ENCODE measurements at regions of chr16 and their contacts with region 1.

Region 1: DNA sequence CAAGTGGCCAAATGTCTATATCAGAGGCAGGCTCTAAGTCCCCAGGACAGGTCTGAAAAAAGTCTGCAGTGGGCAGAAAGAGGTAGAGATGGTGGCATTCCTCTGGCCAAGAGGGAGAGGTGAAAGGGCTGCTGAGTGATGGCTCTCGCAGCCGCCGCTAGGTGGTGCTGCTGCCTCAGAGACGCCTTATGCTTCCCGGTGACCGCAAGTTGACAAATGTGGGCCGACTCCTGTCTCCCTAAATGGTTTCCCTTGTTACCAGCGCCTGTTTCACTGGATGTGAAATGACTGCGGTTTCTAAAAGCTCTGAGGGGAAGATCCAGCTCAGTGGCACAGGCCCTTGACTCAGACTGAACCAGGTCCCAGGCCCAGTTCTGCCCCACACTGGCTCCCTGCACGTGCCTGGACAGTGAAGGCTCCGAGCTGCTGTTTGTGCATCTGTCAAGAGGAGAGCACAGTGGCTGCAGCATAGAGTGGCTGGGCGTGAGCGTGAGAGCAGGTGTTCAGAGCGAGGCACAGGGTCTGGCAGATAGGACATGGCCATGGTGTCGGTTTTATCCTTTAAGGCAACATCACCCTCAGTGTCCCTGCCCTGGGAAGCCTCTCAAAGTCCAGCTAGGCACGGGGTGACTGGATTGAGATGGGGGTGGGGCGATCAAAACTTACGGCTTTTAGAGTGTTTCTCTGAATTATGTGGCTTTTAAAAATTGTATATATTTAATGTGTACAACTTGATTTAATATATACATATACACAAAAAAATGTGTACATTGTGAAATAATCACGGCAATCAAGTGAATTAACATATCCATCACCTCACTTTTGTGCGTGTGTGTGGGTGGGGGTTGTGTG is 19.9 kb downstream of the CLEC16A start:
- DNase-seq: peak; percentile 74
- H3K4me3 Mint-ChIP-seq: peak overlapping the region; percentile 68
- H3K27ac Mint-ChIP-seq: peak overlapping the region; percentile 97
- H3K4me1 Mint-ChIP-seq: peaks cover 75% of the 10 kb centered on the region
- H3K27me3 Mint-ChIP-seq: no peaks in the 10 kb centered on the region

Region 2: DNA sequence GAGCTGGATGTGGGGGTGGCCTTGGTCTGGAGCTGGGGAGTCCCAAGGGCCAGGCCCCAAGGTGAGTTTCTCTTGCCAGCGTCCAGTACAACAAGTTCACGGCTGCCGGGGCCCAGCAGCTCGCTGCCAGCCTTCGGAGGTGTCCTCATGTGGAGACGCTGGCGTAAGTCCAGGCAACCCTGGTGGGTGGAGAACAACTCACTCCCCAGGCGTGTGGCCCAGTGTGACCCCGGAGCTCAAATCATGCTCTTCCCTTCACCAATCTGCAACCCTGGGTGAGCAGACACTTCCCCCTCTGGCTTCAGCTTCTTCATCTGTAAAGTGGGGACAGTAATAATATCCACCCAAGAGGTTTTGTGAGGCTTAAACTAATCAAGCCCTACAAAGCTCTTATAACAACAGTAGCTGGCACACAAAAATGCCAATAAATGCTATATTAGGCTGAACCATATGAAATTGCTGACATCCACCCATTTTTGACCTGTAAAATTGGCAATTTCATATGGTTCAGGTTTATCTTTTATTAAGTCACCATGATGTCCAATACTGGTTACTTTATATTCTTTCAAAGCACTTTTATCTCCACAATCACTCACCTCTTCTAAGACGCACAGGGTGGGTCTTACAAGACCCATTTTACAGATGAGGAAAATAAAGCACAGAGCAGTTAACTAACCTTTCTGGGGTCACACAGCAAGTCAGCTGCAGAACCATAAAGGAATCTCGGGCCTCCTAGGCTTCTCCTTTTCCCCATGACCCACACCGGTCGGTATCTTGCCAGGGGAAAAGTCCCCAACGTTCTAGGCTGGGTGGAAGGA is 41.7 kb before region 1 on chr16:
- intact Hi-C with region 1: no loop called
- DNase-seq: no peak
- H3K4me3 Mint-ChIP-seq: no peak overlapping the region
- H3K27ac Mint-ChIP-seq: no peak overlapping the region
- H3K4me1 Mint-ChIP-seq: peaks cover 14% of the 10 kb centered on the region
- H3K27me3 Mint-ChIP-seq: no peaks in the 10 kb centered on the region

Region 3: DNA sequence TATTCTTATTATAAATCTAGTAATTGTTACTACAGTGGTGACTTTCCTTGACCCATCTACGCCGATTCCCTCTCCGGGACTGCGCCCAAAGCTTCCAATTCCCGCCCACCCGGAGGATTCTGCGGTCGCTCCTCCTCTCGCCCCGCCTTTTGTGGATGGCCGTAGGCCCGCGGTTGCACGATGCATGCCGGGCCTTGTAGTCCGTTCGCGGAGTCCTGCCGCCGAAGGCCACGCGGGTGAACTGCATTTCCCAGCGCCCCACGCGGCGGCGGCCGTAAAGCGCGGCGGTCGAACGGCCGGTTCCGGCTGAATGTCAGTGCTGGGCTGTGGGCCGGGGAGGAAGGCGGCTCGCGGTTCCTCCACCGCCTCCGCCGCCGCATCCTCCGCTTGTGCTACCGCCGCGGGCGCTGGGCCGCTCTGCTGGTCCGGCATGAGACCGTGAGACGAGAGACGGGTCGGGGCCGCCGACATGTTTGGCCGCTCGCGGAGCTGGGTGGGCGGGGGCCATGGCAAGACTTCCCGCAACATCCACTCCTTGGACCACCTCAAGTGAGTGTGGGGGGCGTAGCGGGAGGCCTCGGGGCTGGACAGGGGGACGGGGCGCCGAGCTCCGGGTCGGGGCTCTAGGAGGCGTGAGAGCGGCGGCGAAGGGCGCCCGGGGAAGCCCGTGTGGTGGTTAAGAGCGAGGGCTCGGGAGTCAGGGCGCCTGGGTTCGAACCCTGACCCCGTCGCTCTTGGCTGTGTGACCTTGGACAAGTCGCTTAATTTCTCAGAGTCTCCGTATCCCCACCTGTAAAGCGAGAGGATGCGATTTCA is 19.8 kb before region 1 on chr16 and contains the start of gene CLEC16A:
- intact Hi-C with region 1: loop called (anchors 1 kb)
- DNase-seq: peak; percentile 97
- H3K4me3 Mint-ChIP-seq: peak within 1 kb of the TSS; percentile 91
- H3K27ac Mint-ChIP-seq: peak within 1 kb of the TSS; percentile 80
- H3K4me1 Mint-ChIP-seq: peaks cover 56% of the 10 kb centered on the region
- H3K27me3 Mint-ChIP-seq: no peaks in the 10 kb centered on the region
- total RNA-seq, gene CLEC16A: 36.3 and 37.4 TPM in 2 replicates

Region 4: DNA sequence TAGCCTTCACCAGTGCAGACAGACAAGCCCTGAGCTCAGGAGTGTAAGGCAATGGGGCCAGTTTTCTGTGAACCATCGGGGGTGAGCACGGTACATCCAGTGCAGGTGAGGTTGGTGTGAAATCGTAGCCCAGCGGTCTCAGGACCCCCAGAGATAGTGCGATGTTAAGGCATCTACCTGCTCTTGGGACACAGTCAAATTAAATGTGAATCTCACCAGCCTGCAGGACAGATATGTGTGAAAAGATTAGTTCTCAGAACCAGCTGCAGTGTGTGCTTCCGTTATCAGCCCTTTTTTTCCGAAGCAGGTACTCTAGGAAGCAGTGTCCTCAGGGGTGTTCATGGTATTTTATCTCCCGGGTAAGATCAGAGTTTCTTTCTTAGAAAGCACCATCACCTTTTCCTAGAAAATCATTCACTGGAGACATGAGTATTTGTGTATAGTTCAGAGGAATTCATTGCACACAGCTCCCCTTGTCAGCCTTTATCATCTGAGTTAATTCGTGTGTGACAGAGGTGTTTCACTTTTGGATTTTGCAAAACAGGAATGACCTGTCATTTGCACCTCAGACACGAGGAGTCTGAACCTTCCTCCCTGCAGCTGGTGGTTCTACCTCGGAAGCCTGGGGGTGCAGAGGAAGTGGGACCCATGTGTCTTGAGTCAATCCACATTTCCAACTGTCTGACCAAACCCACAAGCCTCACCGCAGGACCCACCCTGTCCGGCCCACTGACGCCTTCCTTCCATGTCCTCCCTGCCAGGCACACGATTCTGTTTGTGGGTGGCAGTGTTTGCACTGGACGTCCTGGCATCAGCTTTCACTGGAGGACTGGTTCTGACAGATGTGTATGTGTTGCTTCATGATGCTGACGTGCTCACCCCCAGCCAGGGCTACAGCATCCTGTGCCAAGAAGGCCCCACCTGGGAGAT is 87.9 kb after region 1 on chr16:
- intact Hi-C with region 1: loop called (anchors 1 kb)
- DNase-seq: peak; percentile 75
- H3K4me3 Mint-ChIP-seq: peak overlapping the region; percentile 60
- H3K27ac Mint-ChIP-seq: peak overlapping the region; percentile 83
- H3K4me1 Mint-ChIP-seq: peaks cover 68% of the 10 kb centered on the region
- H3K27me3 Mint-ChIP-seq: no peaks in the 10 kb centered on the region

Region 5: GRCh38 chr16:11212798-11213205 is 248.5 kb after region 1 on chr16:
- intact Hi-C with region 1: no loop called
- DNase-seq: no peak
- H3K4me3 Mint-ChIP-seq: no peak overlapping the region
- H3K27ac Mint-ChIP-seq: no peak overlapping the region
- H3K4me1 Mint-ChIP-seq: peaks cover 18% of the 10 kb centered on the region
- H3K27me3 Mint-ChIP-seq: no peaks in the 10 kb centered on the region

Region 6: DNA sequence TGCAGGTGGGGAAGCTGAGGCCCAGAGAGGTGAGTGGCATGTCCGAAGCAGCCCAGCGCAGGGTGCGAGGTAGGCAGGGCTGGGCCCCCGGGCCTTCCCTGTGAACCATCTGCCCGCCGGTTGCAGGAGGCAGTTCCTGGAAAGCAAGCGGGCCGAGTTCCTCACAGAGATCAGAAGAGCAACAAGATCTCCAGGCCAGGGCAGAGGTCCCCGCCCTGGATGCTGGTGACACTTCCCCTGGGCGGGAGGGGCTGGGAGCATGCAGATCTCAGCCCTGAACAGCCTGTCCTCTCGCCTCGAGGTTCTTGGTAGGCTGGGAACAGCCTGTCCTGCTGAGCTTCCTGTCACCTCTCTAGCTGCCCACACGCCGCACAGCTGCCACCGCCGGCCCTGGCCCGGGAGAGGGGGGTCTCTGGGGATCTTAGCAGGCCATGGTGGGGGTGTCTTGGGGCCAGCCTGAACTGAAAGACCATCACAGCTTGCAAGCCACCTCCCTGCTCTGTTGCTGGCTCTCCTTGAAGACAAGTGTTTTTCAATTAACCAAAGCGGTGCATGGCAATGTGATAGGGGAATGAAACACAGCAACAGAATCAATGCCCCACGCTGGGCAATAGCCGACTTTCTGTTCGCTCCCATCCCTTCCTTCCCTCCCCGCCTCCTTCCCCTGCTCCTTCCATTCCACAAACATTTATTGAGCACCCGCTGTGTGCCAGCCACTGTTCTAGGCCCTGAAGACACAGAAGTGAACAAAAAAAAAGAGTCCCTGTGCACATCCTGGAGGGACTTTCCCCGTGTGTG is 260.0 kb after region 1 on chr16:
- intact Hi-C with region 1: loop called (anchors 1 kb)
- DNase-seq: peak; percentile 66
- H3K4me3 Mint-ChIP-seq: peak overlapping the region; percentile 80
- H3K27ac Mint-ChIP-seq: peak overlapping the region; percentile 98
- H3K4me1 Mint-ChIP-seq: peaks cover 58% of the 10 kb centered on the region
- H3K27me3 Mint-ChIP-seq: no peaks in the 10 kb centered on the region

Region 7: GRCh38 chr16:11354733-11355574 is 390.7 kb after region 1 on chr16:
- intact Hi-C with region 1: loop called (anchors 1 kb)
- DNase-seq: peak; percentile 80
- H3K4me3 Mint-ChIP-seq: peak overlapping the region; percentile 71
- H3K27ac Mint-ChIP-seq: peak overlapping the region; percentile 83
- H3K4me1 Mint-ChIP-seq: peaks cover 64% of the 10 kb centered on the region
- H3K27me3 Mint-ChIP-seq: peaks cover 4% of the 10 kb centered on the region

Region 8: DNA sequence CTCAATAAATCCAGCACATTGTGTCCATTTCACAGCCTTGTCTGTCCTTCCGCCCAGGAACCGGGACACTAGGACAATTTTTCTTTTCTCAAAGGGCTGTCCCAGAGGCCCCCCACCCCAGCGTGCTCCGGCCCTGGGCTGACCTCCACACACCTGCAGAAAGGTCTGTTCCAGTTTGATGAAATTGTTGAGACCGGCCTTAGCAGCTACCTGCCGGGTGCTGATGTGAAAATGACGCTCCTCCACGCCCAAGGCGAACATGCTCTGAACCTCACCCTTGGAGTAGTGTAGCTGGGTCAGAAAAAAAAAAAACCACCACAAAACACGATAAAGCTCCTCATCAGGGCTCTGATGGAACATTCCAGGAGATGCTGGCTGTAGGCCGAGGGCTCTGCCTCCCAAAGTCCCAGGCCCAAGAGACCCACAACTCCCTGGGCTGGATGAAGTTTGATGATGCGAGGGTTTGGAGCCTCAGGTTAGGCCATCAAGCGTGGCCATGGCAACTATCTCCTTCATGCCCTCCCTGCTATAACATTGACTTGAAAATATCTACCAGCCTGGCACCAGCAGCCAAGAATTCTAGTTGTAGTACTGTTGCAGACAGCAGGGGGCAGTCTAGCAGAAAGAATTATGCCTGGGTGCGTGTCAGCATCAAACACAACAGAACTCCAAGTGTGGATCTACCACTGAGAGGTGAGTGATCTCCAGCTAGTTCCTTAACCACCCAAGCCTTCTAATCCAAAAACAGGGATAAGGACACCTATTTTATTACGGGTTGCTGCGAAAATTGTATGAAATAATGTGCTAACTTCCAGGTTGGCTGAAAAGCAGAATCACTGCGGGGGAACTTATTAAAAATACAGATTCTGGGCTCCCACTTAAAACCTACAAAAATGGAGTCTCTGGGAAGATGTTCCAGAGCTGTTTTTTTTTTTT is 443.1 kb after region 1 on chr16:
- intact Hi-C with region 1: loop called (anchors 1 kb)
- DNase-seq: peak; percentile 48
- H3K4me3 Mint-ChIP-seq: no peak overlapping the region
- H3K27ac Mint-ChIP-seq: no peak overlapping the region
- H3K4me1 Mint-ChIP-seq: no peaks in the 10 kb centered on the region
- H3K27me3 Mint-ChIP-seq: peaks cover 6% of the 10 kb centered on the region

Region 9: DNA sequence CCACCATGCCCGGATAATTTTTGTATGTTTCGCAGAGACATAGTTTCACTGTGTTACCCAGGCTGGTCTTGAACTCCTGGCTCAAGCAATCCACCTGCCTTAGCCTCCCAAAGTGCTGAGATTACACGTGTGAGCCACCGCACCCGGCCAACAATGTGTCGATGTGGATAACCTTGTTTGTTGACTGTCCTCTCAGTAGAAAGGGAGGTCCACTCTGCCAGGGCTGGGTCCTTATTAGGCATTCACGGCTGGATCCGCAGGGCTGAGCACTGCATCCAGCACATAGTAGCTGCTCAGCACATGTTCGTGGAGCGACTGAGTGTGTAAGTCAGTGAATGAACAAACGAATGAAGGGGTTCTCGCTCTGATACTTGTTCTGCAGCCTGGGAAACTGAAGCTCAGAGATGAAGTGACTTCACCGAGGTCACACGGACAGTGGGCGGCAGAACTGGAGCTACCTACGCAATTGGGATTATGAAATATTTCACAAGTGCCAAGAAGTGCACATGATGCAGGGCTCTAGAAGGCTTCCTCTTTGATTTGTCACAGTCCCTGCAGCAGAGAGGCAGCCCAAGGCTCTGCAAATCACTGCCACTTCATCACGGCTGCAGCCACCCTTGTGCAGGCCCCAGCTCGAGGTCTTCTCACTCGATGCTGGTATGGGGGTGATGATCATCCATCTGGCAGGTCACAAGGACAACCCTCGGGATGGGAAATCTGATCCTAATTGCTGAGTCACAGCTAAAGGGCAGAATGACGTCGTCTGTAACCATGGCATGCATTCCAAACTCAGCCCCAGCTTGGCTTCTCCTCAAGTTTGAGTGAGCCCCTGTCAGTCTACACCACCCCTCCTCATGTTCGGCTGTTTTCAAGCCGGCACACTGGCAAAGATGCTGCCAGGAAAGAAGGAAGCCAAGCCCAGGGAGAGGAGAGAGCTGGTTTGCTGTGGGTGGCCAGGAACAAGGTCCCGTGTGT is 675.9 kb after region 1 on chr16:
- intact Hi-C with region 1: loop called (anchors 1 kb)
- DNase-seq: no peak
- H3K4me3 Mint-ChIP-seq: no peak overlapping the region
- H3K27ac Mint-ChIP-seq: no peak overlapping the region
- H3K4me1 Mint-ChIP-seq: peaks cover 5% of the 10 kb centered on the region
- H3K27me3 Mint-ChIP-seq: peaks cover 11% of the 10 kb centered on the region

Measured in activated T-helper 1 cell treated with anti-CD3 and anti-CD28 coated beads, Interleukin-12 subunit alpha, Interleukin-12 subunit beta, Interleukin-2, Interleukin-4 antibody, amounts not matched to agents 30 ng/mL and 10 ng/mL and 1 ng/mL, durations not matched to agents 14 hours and 24 hours and 36 hours (primary cell).